ENCODE measurements at regions of chr10 and their contacts with region 1.

Region 1: GRCh38 chr10:63166742-63167258 is 33.7 kb downstream of the NRBF2 start:
- DNase-seq: peak; percentile 74
- ATAC-seq: peak; percentile 63
- H3K4me3 ChIP-seq: no peak overlapping the region
- H3K27ac ChIP-seq: no peak overlapping the region
- H3K4me1 ChIP-seq: no peaks in the 10 kb centered on the region
- H3K27me3 ChIP-seq: no peaks in the 10 kb centered on the region
- CTCF ChIP-seq: peak; percentile 68
- EP300 ChIP-seq: no peak
- POLR2A ChIP-seq: no peak
- RAD21 ChIP-seq: peak; percentile 36; the same call in 1 of the 2 replicates

Region 2: DNA sequence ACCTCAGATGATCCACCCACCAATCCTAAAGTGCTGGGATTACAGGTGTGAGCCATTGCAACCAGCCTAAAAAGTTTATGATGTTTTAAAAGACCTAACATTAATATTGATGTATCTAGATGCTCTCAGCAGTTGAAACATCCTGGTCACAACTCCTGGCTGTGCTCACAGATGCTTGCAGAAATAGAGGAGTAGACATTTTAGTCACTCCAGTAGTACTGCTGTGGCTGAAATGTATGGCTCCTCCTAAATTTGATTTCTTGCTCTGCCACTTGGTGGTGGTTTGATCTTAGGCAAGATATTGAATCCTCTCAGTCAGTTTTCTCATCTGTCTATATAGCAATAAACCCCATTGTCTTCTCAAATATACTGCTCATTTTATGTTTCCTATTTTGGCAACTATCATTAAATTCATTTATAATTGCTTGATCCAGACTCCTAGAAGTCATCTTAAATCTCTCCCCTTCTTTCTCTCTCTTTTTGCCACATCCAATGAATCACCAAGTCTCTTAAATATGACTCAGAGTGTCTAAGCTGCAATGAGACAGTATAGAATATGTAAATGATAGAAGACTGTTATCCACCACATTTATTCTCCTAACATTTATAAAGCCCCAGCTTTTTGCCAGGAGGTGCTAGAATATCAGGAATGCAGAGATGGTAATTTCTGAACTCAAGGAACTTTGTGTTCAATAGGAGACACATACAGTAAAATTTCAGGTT is 111.8 kb before region 1 on chr10:
- CTCF ChIA-PET with region 1: no interaction called
- POLR2A ChIA-PET with region 1: no interaction called
- in situ Hi-C with region 1: no loop called
- intact Hi-C with region 1: no loop called
- DNase-seq: no peak
- ATAC-seq: no peak
- H3K4me3 ChIP-seq: no peak overlapping the region
- H3K27ac ChIP-seq: no peak overlapping the region
- H3K4me1 ChIP-seq: no peaks in the 10 kb centered on the region
- H3K27me3 ChIP-seq: no peaks in the 10 kb centered on the region; a peak in 1 of 5 replicates
- CTCF ChIP-seq: no peak
- EP300 ChIP-seq: no peak
- POLR2A ChIP-seq: no peak
- RAD21 ChIP-seq: no peak

Region 3: DNA sequence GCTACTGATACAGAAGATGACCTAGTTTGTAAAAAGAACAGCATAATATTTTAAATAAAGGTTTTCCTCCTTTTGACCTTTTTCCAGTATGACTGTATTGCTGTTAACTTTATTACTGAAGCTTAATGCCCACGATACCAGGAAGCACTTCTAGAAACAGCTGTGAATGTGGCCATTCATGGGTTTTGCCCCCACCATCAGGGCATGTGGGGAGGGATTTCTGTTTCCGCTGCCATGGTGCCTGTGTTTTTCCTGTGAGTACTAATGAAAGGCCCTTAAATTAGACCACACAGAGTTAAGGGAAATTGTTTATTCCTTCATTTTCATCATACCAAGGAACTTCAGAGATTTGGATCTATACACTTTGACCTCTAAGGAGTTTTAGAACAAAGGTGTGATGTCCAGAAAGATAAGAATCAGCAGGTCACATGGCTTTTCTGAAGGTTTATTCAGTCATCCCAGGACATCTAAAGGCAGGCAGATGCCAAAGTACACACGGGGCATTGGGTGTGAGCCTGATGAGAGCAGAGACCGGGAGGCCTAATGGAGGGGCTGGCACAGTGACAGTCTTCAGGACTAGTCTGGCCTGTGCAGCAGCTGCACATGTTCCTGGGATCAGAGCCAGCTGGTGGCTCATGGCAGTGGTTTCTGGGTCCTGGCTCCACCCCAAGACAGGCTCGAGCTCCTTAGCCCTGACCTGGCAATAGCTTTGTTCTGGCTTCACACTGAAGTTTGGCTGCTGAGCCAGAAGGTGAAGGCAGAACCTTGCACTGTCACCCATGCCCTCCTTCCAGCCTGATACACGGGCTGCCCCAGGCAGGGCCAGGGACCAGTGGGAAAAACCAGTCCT is 545.3 kb after region 1 on chr10:
- CTCF ChIA-PET with region 1: no interaction called
- POLR2A ChIA-PET with region 1: no interaction called
- in situ Hi-C with region 1: loop called (anchors 10 kb)
- intact Hi-C with region 1: no loop called
- DNase-seq: peak; percentile 33
- ATAC-seq: peak; percentile 82
- H3K4me3 ChIP-seq: no peak overlapping the region
- H3K27ac ChIP-seq: no peak overlapping the region
- H3K4me1 ChIP-seq: peaks cover 36% of the 10 kb centered on the region
- H3K27me3 ChIP-seq: no peaks in the 10 kb centered on the region; a peak in 2 of 5 replicates
- CTCF ChIP-seq: no peak
- EP300 ChIP-seq: no peak
- POLR2A ChIP-seq: no peak
- RAD21 ChIP-seq: no peak

Region 4: GRCh38 chr10:63767138-63767801 is 600.5 kb after region 1 on chr10:
- CTCF ChIA-PET with region 1: no interaction called
- POLR2A ChIA-PET with region 1: no interaction called
- in situ Hi-C with region 1: no loop called
- intact Hi-C with region 1: loop called (anchors 2 kb)
- DNase-seq: peak; percentile 4
- ATAC-seq: no peak
- H3K4me3 ChIP-seq: no peak overlapping the region
- H3K27ac ChIP-seq: no peak overlapping the region
- H3K4me1 ChIP-seq: peaks cover 15% of the 10 kb centered on the region
- H3K27me3 ChIP-seq: no peaks in the 10 kb centered on the region
- CTCF ChIP-seq: peak; percentile 33
- EP300 ChIP-seq: no peak
- POLR2A ChIP-seq: no peak
- RAD21 ChIP-seq: no peak